Activated B cell treated with CpG ODN at 0.5 μM for 24 hours (primary cell): ENCODE measurements at regions of chr19 and their contacts with region 1.

Region 1: GRCh38 chr19:2084993-2085720 is 11.0 kb downstream of the MOB3A start:
- DNase-seq: peak; percentile 80
- ATAC-seq: peak; percentile 23
- H3K4me3 Mint-ChIP-seq: peak overlapping the region; percentile 97
- H3K27ac Mint-ChIP-seq: peak overlapping the region; percentile 99
- H3K4me1 Mint-ChIP-seq: peaks cover 88% of the 10 kb centered on the region
- H3K27me3 Mint-ChIP-seq: no peaks in the 10 kb centered on the region
- CTCF ChIP-seq: no peak

Region 2: GRCh38 chr19:1942078-1942933 is 142.9 kb before region 1 on chr19:
- CTCF ChIA-PET with region 1: no interaction called
- POLR2A ChIA-PET with region 1: interaction called, 5 read pairs
- intact Hi-C with region 1: loop called (anchors 1 kb)
- DNase-seq: peak; percentile 69
- ATAC-seq: peak; percentile 53
- H3K4me3 Mint-ChIP-seq: peak overlapping the region; percentile 91
- H3K27ac Mint-ChIP-seq: peak overlapping the region; percentile 96
- H3K4me1 Mint-ChIP-seq: peaks cover 46% of the 10 kb centered on the region
- H3K27me3 Mint-ChIP-seq: no peaks in the 10 kb centered on the region
- CTCF ChIP-seq: no peak

Region 3: DNA sequence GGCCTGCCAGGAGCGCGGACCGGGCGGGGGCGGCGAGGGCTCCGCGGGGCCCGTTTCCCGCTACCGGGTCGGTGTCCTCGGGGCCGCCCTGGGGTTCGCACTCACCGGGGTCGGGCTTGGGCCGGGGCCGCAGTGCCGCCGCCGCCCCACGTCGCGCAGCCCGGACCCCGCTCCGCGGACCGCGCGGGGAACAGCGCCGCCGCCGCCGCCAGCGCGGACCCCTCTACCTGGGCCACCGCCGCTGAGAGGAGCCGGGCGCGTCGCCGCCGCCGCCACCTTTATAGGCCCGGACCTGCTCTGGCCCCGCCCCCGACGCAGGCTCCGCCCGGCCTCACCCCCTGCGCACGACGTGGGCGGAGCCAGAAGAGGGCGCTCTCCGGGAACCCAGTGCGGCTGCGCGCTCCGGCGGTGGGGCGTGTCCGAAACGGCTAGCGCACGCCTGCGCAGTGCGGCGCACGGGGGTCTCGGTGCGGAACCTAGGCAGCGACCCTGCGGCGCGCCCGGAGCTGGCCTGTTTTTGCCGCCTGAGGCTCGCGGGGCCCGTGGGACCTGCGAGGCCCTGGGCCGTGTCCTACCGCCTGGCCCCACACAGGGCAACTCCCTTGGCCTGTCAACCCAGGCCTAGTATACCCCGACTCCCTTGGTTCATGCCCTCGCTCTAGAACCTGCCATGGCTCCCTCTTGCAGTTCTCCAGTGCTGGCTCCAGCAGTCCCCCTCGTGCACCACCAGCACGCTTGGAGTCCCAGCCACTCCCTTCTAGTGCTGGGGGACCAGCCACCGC is 34.0 kb before region 1 on chr19 and contains the start of gene MKNK2:
- CTCF ChIA-PET with region 1: interaction called, 25 read pairs
- POLR2A ChIA-PET with region 1: interaction called, 2,723 read pairs
- intact Hi-C with region 1: loop called (anchors 1 kb)
- DNase-seq: peak; percentile 99
- ATAC-seq: peak; percentile 61
- H3K4me3 Mint-ChIP-seq: peak within 1 kb of the TSS; percentile 93
- H3K27ac Mint-ChIP-seq: peak within 1 kb of the TSS; percentile 97
- H3K4me1 Mint-ChIP-seq: peaks cover 77% of the 10 kb centered on the region
- H3K27me3 Mint-ChIP-seq: no peaks in the 10 kb centered on the region
- CTCF ChIP-seq: no peak
- total RNA-seq, gene MKNK2: 1,134 and 1,197 TPM in 2 replicates

Region 4: GRCh38 chr19:2096480-2097329 is 11.5 kb after region 1 on chr19 and contains the start of gene IZUMO4:
- CTCF ChIA-PET with region 1: interaction called, 5 read pairs
- POLR2A ChIA-PET with region 1: interaction called, 2,723 read pairs
- intact Hi-C with region 1: loop called (anchors 1 kb)
- DNase-seq: peak; percentile 99
- ATAC-seq: peak; percentile 76
- H3K4me3 Mint-ChIP-seq: peak within 1 kb of the TSS; percentile 93
- H3K27ac Mint-ChIP-seq: peak within 1 kb of the TSS; percentile 95
- H3K4me1 Mint-ChIP-seq: peaks cover 38% of the 10 kb centered on the region
- H3K27me3 Mint-ChIP-seq: no peaks in the 10 kb centered on the region
- CTCF ChIP-seq: no peak
- total RNA-seq, gene IZUMO4: 73.0 and 78.6 TPM in 2 replicates

Region 5: GRCh38 chr19:2269244-2269947 is 184.2 kb after region 1 on chr19:
- CTCF ChIA-PET with region 1: no interaction called
- POLR2A ChIA-PET with region 1: interaction called, 4 read pairs
- intact Hi-C with region 1: loop called (anchors 1 kb)
- DNase-seq: peak; percentile 100
- ATAC-seq: peak; percentile 67
- H3K4me3 Mint-ChIP-seq: peak overlapping the region; percentile 92
- H3K27ac Mint-ChIP-seq: peak overlapping the region; percentile 91
- H3K4me1 Mint-ChIP-seq: peaks cover 60% of the 10 kb centered on the region
- H3K27me3 Mint-ChIP-seq: no peaks in the 10 kb centered on the region
- CTCF ChIP-seq: no peak